ENCODE measurements at regions of chr15 and their contacts with region 1.

Region 1: DNA sequence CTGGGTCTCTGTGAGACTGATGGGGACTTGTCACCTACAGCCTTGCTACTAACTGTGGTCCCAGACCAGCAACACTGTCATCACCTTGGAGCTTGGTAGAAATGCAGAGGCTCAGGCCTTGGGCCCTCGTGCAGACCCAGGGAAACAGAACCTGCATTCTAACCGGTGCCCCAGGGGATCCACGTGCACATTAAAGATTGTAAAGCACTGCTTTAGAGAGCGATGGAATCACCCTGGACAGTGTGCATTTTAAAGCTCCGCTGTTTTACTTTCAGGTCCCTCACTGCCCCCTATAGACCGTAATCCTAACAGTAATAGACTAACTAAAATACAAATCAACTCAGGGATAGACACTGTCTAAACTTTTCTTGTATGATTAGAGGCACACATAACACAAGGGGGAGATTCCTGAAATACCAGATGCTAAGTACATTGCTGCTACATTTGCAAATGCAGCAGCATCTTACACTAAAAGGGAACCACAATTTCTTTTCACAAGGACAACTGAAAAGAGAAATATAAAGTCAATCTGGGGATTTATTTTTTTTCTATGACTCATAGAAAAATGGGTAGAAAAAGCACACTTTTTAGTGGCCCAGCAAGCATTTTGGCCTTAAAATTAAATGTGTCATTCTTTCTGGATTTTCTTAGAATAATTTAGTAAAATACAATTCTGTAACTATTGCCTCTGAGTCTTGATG is 10.5 kb upstream of the SH3GL3 start:
- DNase-seq: no peak
- ATAC-seq: no peak
- H3K4me3 ChIP-seq: no peak overlapping the region
- H3K27ac ChIP-seq: no peak overlapping the region
- H3K4me1 ChIP-seq: no peaks in the 10 kb centered on the region
- H3K27me3 ChIP-seq: peaks cover 0 to 6% (median 0%) of the 10 kb centered on the region in 3 donors
- CTCF ChIP-seq: no peak

Region 2: GRCh38 chr15:83559310-83559966 is 122.8 kb after region 1 on chr15:
- intact Hi-C with region 1: loop called (anchors 2 to 5 kb)
- DNase-seq: no peak
- ATAC-seq: peak in 3 of 4 donors; percentile 48 to 64 (median 57)
- H3K4me3 ChIP-seq: no peak overlapping the region
- H3K27ac ChIP-seq: no peak overlapping the region
- H3K4me1 ChIP-seq: no peaks in the 10 kb centered on the region
- H3K27me3 ChIP-seq: no peaks in the 10 kb centered on the region
- CTCF ChIP-seq: peak; percentile 68

Measured in psoas muscle (tissue), 8 donors.